ENCODE measurements at regions of chr11 and their contacts with region 1.

Region 1: GRCh38 chr11:44190868-44191200 is 95.4 kb downstream of the EXT2 start:
- DNase-seq: no peak
- H3K4me3 ChIP-seq: no peak overlapping the region
- H3K27ac ChIP-seq: no peak overlapping the region
- H3K4me1 ChIP-seq: peaks cover 0 to 13% (median 8%) of the 10 kb centered on the region in 4 experiments; a peak in 3 of 7 replicates
- H3K27me3 ChIP-seq: no peaks in the 10 kb centered on the region
- CTCF ChIP-seq: no peak
- EP300 ChIP-seq: no peak
- POLR2A ChIP-seq: no peak
- RAD21 ChIP-seq: no peak

Region 2: GRCh38 chr11:44178381-44178780 is 12.5 kb before region 1 on chr11:
- CTCF ChIA-PET with region 1: interaction called, 13 read pairs
- POLR2A ChIA-PET with region 1: no interaction called
- DNase-seq: no peak
- H3K4me3 ChIP-seq: peak overlapping the region in 1 of 4 experiments; percentile 10; a peak in 1 of 8 replicates
- H3K27ac ChIP-seq: no peak overlapping the region
- H3K4me1 ChIP-seq: peaks cover 3 to 12% (median 8%) of the 10 kb centered on the region in 4 experiments; a peak in 5 of 7 replicates
- H3K27me3 ChIP-seq: no peaks in the 10 kb centered on the region
- CTCF ChIP-seq: no peak
- EP300 ChIP-seq: no peak
- POLR2A ChIP-seq: no peak
- RAD21 ChIP-seq: peak in 1 of 2 experiments; percentile 4; a peak in 1 of 4 replicates